Mammary epithelial cell (primary cell): ENCODE measurements at regions of chr4 and their contacts with region 1.

Region 1: GRCh38 chr4:183256756-183257385 is 63.2 kb downstream of the CLDN22 start:
- DNase-seq: peak; percentile 20
- H3K4me3 ChIP-seq: no peak overlapping the region
- H3K27ac ChIP-seq: no peak overlapping the region
- H3K4me1 ChIP-seq: no peaks in the 10 kb centered on the region
- H3K27me3 ChIP-seq: no peaks in the 10 kb centered on the region
- CTCF ChIP-seq: peak; percentile 82 to 85

Region 2: DNA sequence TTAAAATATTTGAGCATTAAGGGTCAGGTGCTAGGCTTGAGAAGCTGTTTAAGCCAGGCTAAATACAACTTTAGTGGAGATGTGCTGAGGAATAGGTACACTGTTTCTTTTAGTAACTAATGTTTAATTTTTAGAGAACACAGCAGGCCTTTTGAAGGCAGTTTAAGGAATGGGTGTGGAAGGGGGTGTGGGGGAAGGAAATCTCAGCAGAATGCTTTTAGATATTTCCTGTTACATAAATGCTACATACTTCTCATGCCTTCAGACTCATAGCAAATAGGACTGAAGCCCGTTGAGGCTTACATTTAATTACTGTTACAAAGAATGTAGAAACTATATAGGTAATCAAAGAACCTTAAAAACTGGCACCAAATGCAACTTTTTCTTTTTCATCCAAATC is 91.5 kb before region 1 on chr4:
- CTCF ChIA-PET with region 1: no interaction called
- dilution Hi-C with region 1: loop called (anchors 10 kb)
- in situ Hi-C with region 1: no loop called
- intact Hi-C with region 1: no loop called
- DNase-seq: no peak
- H3K4me3 ChIP-seq: no peak overlapping the region
- H3K27ac ChIP-seq: no peak overlapping the region
- H3K4me1 ChIP-seq: peaks cover 4% of the 10 kb centered on the region
- H3K27me3 ChIP-seq: no peaks in the 10 kb centered on the region
- CTCF ChIP-seq: no peak

Region 3: DNA sequence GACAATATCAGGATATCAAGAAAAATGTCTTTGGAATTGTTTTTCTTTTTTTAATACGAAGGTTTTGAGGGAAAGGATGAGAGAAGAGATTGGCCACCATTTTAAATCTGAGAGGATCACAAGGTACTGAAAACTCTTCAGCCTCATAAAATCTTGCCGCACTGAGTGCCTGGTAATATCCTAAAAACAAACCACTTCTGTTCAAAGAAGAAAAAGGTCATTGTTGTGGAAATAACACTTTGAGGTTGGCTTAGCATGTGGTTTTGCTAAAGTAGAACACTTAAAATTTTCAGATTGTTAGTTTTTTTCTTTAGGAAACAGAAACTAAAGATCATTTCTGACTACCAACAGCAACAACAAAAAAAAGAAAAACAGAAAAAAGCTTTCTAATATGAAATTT is 64.2 kb after region 1 on chr4:
- CTCF ChIA-PET with region 1: no interaction called
- dilution Hi-C with region 1: no loop called
- in situ Hi-C with region 1: no loop called
- intact Hi-C with region 1: no loop called
- DNase-seq: no peak
- H3K4me3 ChIP-seq: no peak overlapping the region
- H3K27ac ChIP-seq: no peak overlapping the region
- H3K4me1 ChIP-seq: no peaks in the 10 kb centered on the region
- H3K27me3 ChIP-seq: no peaks in the 10 kb centered on the region
- CTCF ChIP-seq: no peak

Region 4: DNA sequence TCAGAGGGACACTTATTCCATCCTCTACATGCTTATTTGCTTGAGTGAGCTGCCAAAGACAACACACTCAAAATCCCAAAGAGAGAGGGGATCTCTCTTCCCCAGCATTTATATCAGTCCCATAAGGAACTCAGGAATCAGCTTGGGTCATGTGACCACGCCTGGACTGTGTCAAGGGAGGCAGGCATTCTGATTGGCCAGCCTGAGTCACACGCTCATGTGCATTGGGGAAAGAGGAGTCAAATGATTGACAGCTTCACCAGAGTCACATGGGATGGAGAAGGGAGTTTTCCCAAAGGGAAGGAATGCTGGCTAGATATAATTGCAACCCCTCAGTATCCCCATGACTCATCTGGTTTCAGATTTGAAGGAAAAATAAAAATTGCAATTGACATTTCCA is 353.2 kb after region 1 on chr4:
- CTCF ChIA-PET with region 1: no interaction called
- dilution Hi-C with region 1: no loop called
- in situ Hi-C with region 1: no loop called
- intact Hi-C with region 1: no loop called
- DNase-seq: peak; percentile 10
- H3K4me3 ChIP-seq: no peak overlapping the region
- H3K27ac ChIP-seq: no peak overlapping the region
- H3K4me1 ChIP-seq: no peaks in the 10 kb centered on the region
- H3K27me3 ChIP-seq: no peaks in the 10 kb centered on the region
- CTCF ChIP-seq: no peak

Region 5: DNA sequence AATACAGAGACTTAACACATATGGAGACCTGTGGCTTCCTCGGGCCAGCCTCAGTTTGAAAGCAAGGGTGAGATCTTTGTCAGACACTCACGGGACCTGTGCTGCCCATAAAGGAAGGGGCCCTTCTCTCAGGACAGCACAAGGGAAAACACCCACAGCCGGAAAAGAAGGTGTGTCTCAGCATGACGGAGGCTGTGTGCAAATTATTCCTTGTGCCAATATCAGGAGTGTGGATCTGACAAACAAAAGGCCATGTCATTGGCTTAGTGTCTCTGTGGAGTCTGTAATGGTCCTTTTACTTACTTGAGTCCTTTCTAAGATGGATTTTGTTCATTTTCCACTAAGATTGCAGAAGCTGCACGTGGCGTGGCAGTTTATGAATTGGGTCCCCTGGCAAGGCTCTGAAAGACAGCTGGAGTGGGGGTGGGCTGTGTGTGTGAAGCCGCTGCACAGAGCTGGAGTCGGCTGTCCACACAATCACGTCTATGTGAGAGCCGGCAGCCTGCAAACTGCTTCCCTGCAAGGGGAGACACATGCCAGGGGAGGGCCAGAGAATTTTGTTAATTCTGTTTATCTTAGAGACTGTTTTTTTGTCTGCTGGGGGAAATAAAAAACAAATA is 958.9 kb after region 1 on chr4:
- CTCF ChIA-PET with region 1: no interaction called
- dilution Hi-C with region 1: no loop called
- in situ Hi-C with region 1: no loop called
- intact Hi-C with region 1: no loop called
- DNase-seq: no peak
- H3K4me3 ChIP-seq: no peak overlapping the region
- H3K27ac ChIP-seq: no peak overlapping the region
- H3K4me1 ChIP-seq: no peaks in the 10 kb centered on the region
- H3K27me3 ChIP-seq: no peaks in the 10 kb centered on the region
- CTCF ChIP-seq: no peak